ENCODE measurements at regions of chr12 and their contacts with region 1.

Region 1: GRCh38 chr12:120321382-120322202 is 6.0 kb downstream of the PLA2G1B start:
- DNase-seq: no peak

Region 2: DNA sequence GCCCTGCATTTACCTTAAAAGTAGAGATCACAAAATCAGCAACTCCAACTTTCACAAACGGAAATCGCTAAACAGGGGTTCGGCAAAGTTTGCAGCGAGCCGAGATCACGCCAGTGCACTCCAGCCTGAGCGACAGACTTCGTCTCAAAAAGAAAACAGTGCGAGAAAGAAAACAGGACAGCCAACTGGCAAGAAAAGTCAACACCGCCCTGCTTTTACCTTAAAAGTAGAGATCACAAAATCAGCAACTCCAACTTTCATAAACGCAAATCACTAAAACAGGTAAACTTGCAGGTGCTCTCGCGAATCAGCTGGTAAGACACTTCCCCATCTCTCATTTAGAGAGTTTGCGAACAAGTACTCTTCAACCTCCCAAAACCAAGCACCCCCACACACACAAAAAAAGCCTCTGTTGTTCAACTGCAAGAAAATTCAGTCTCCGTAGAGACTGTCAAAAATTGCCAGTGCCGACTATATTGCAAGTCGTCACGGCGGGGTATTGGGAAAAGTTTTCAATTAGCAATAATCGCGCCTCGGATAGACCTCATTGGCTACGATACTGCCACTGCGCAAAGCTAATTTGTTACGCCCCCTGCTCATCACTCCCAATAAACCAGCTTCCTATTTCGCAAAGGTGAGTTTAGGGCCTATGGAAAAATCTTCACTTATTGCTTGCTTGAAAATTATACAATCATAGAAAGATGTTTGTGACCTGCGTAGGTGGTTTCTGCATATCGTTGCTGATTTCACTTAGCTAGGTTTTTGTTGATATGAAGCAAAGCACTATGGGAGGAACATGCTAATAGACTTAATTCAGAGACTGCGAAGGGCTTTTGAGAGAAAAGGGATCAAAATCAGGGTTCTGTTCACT is 28.7 kb before region 1 on chr12 and contains the start of gene RNU4-1:
- intact Hi-C with region 1: no loop called
- DNase-seq: peak; percentile 39 to 94 (median 60)

Region 3: GRCh38 chr12:120437754-120438494 is 116.3 kb after region 1 on chr12 and contains the start of gene COX6A1:
- intact Hi-C with region 1: loop called (anchors 10 kb)
- DNase-seq: peak; percentile 87 to 99 (median 95)

Measured in posterior cingulate gyrus (tissue), 11 donors.